Activated CD8-positive, alpha-beta memory T cell treated with anti-CD3 and anti-CD28 coated beads, Interleukin-2, amount 10 ng/mL, durations not matched to agents 7 days and 5 days (primary cell): ENCODE measurements at regions of chr18 and their contacts with region 1.

Region 1: GRCh38 chr18:46148810-46149209 is 44.6 kb downstream of the HAUS1 start:
- DNase-seq: peak; percentile 69
- ATAC-seq: peak; percentile 53
- H3K4me3 Mint-ChIP-seq: no peak overlapping the region
- H3K27ac Mint-ChIP-seq: no peak overlapping the region
- H3K4me1 Mint-ChIP-seq: peaks cover 28% of the 10 kb centered on the region
- H3K27me3 Mint-ChIP-seq: peaks cover 16% of the 10 kb centered on the region

Region 2: GRCh38 chr18:46134920-46135675 is 13.7 kb before region 1 on chr18:
- CTCF ChIA-PET with region 1: interaction called, 18 read pairs
- DNase-seq: peak; percentile 33
- ATAC-seq: no peak
- H3K4me3 Mint-ChIP-seq: no peak overlapping the region
- H3K27ac Mint-ChIP-seq: no peak overlapping the region
- H3K4me1 Mint-ChIP-seq: no peaks in the 10 kb centered on the region
- H3K27me3 Mint-ChIP-seq: no peaks in the 10 kb centered on the region

Region 3: GRCh38 chr18:46213295-46213694 is 64.5 kb after region 1 on chr18:
- CTCF ChIA-PET with region 1: interaction called, 11 read pairs
- DNase-seq: no peak
- ATAC-seq: no peak
- H3K4me3 Mint-ChIP-seq: no peak overlapping the region
- H3K27ac Mint-ChIP-seq: no peak overlapping the region
- H3K4me1 Mint-ChIP-seq: peaks cover 59% of the 10 kb centered on the region
- H3K27me3 Mint-ChIP-seq: no peaks in the 10 kb centered on the region